Activated CD4-positive, alpha-beta memory T cell treated with anti-CD3 and anti-CD28 coated beads for 36 hours (primary cell): ENCODE measurements at regions of chr3 and their contacts with region 1.

Region 1: DNA sequence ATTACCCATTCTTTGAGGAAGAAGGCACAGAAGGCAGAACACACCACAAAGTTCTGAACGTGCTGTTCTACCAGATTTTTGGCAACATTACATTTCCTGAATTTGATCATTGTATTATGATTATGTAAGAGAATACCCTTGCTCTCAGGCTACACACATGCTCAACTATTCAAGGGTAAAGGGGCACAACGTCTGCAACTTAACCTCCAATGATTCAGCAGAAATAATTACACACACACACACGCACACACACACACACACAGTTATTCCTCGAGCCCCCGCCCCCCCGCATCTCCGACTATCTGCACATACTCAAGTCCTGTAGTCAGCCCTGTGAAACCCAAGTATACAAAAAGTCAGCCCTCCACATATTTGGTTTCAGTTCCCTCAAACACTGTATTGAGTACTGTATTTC is 26.8 kb downstream of the RPN1 start:
- DNase-seq: no peak
- H3K4me3 Mint-ChIP-seq: no peak overlapping the region
- H3K27ac Mint-ChIP-seq: no peak overlapping the region
- H3K4me1 Mint-ChIP-seq: peaks cover 21% of the 10 kb centered on the region
- H3K27me3 Mint-ChIP-seq: no peaks in the 10 kb centered on the region

Region 2: GRCh38 chr3:128655531-128655930 is 31.8 kb after region 1 on chr3:
- CTCF ChIA-PET with region 1: interaction called, 4 read pairs
- POLR2A ChIA-PET with region 1: interaction called, 6 read pairs
- intact Hi-C with region 1: loop called (anchors 1 kb)
- DNase-seq: no peak
- H3K4me3 Mint-ChIP-seq: no peak overlapping the region
- H3K27ac Mint-ChIP-seq: no peak overlapping the region
- H3K4me1 Mint-ChIP-seq: peaks cover 11% of the 10 kb centered on the region
- H3K27me3 Mint-ChIP-seq: no peaks in the 10 kb centered on the region